Lower leg skin (tissue), 4 donors: ENCODE measurements at regions of chr18 and their contacts with region 1.

Region 1: GRCh38 chr18:31512203-31512764 is 14.3 kb downstream of the DSG2 start:
- DNase-seq: no peak
- H3K4me3 ChIP-seq: no peak overlapping the region
- CTCF ChIP-seq: peak in 1 of 3 donors; percentile 25
- POLR2A ChIP-seq: no peak

Region 2: DNA sequence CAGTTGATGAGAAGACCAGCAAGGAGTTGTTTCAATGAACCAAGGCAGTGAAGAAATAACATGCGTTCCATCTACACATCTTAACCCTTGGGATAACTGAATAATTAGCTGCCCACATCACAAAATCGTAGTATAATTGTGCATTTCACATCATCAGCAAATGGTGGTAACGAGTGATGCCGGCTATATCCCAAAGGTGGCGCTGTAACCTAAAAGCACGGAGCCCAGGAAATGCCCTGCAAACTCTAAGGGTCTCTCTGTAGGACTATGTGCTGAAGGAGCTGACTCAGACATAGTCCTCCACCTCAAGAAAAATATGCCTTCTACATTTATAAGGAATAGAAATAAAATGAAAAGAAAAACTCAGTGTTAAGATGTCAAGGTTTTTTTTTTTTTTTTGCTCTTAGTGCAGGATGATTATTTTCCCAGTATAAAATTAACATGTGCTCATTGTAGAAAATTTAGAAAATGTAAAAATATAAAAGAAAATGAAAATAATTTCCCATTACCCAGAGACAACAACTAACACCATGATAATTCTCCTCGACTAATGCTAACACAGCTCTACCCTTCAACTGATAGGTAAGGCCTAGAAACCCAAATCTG is 87.8 kb before region 1 on chr18:
- intact Hi-C with region 1: loop called (anchors 10 kb)
- DNase-seq: no peak
- H3K4me3 ChIP-seq: no peak overlapping the region
- CTCF ChIP-seq: no peak
- POLR2A ChIP-seq: no peak

Region 3: DNA sequence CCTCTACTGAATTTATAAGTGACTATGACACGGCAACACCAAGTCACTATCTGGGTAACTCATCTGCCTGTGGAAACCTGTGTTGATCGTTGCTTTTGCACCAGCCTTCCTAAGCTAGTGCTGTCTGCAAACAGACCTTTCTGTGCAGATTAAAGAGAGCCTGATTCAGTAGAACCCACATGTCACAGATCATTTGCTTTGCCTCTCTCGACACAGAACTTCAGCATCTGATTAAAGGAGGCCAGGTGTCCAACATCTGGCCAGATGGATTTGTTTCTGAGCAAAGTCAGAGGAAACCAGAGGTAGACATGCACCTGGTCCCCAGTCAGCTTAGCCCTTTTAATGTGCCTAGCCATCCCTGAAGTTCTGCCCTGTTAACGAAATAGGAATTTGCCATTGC is 64.4 kb after region 1 on chr18:
- intact Hi-C with region 1: no loop called
- DNase-seq: no peak
- H3K4me3 ChIP-seq: no peak overlapping the region
- CTCF ChIP-seq: no peak
- POLR2A ChIP-seq: no peak

Region 4: GRCh38 chr18:31596081-31596872 is 84.0 kb after region 1 on chr18:
- intact Hi-C with region 1: no loop called
- DNase-seq: no peak
- H3K4me3 ChIP-seq: no peak overlapping the region
- CTCF ChIP-seq: no peak
- POLR2A ChIP-seq: no peak